Adrenal gland (tissue), 19 donors: ENCODE measurements at regions of chr17 and their contacts with region 1.

Region 1: GRCh38 chr17:1455797-1456599 is at the start of gene CRK:
- DNase-seq: peak; percentile 95 to 98 (median 97)
- H3K4me3 ChIP-seq: peak within 1 kb of the TSS; percentile 54 to 99 (median 82)
- H3K27ac ChIP-seq: peak within 1 kb of the TSS; percentile 90 to 100 (median 99)
- H3K4me1 ChIP-seq: peaks cover 33 to 53% of the 10 kb centered on the region in 2 donors
- H3K27me3 ChIP-seq: no peaks in the 10 kb centered on the region
- CTCF ChIP-seq: peak in 1 of 6 experiments; percentile 5
- POLR2A ChIP-seq: peak; percentile 85 to 90
- total RNA-seq, gene CRK: 49.6 to 80.6 (median 59.6) TPM

Region 2: DNA sequence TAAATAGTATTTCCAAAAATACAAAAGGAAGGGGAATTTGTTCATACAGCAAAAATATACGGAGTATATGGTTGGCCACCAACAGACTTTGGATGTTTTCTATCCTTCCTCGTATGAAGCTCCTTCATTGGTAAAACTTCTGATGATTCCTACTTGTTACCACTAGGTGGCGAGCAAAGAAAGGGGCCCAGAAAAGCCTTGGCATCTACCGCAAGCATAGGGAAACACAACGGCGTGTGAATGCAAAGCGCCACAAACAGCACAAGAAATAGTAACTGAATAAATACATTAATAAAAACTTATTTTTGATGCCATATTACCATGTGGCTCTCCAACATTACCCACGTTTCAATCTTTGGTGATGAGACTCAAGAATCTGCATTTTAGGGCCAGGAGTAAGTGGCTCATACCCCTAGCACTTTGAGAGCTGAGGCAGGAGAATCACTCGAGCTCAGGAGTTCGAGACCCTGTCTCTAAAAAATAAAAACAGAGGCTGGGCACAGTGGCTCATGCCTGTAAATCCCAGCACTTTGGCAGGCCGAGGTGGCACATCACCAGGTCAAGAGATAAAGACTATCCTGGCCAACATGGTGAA is 90.5 kb before region 1 on chr17:
- intact Hi-C with region 1: loop called in 1 of 2 experiments (anchors 10 kb)
- DNase-seq: peak; percentile 53 to 85 (median 63)
- H3K4me3 ChIP-seq: no peak overlapping the region
- H3K27ac ChIP-seq: peak overlapping the region in 1 of 5 donors; percentile 25
- H3K4me1 ChIP-seq: peaks cover 30 to 69% of the 10 kb centered on the region in 2 donors
- H3K27me3 ChIP-seq: no peaks in the 10 kb centered on the region
- CTCF ChIP-seq: peak; percentile 82 to 89 (median 86)
- POLR2A ChIP-seq: no peak

Region 3: DNA sequence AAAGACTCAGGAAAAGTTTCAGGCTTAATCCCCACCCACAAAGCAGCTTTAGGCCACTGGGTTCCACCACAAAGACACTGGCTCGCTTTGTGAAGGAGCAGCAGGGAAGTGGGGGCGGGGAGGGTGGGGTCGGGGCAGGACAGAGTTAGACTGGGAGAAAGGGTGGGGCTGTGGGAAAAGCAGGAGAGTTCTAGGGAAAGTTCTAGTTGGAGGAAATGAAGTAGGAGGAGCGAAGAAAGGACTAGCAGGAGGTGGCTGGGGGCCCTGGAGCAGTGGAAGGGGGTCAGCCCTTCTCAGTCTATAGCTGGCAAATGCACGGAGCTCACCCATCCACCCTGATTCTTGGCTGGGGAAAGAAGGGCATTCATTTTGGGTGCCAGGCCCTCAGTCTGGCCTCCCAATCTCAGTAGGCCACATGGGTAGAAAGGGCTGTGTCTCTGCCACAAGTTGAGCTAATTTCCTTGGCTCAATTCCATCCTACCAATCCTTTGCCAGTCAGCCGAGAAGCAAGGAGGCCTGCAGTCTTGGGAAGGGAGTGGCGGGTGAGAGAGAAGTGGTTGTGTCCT is 55.8 kb after region 1 on chr17:
- intact Hi-C with region 1: no loop called
- DNase-seq: no peak
- H3K4me3 ChIP-seq: no peak overlapping the region
- H3K27ac ChIP-seq: peak overlapping the region in 2 of 5 donors; percentile 63 to 80
- H3K4me1 ChIP-seq: peaks cover 9 to 36% of the 10 kb centered on the region in 2 donors
- H3K27me3 ChIP-seq: no peaks in the 10 kb centered on the region
- CTCF ChIP-seq: no peak
- POLR2A ChIP-seq: no peak